K562 (cell line): ENCODE measurements at regions of chr6 and their contacts with region 1.

Region 1: DNA sequence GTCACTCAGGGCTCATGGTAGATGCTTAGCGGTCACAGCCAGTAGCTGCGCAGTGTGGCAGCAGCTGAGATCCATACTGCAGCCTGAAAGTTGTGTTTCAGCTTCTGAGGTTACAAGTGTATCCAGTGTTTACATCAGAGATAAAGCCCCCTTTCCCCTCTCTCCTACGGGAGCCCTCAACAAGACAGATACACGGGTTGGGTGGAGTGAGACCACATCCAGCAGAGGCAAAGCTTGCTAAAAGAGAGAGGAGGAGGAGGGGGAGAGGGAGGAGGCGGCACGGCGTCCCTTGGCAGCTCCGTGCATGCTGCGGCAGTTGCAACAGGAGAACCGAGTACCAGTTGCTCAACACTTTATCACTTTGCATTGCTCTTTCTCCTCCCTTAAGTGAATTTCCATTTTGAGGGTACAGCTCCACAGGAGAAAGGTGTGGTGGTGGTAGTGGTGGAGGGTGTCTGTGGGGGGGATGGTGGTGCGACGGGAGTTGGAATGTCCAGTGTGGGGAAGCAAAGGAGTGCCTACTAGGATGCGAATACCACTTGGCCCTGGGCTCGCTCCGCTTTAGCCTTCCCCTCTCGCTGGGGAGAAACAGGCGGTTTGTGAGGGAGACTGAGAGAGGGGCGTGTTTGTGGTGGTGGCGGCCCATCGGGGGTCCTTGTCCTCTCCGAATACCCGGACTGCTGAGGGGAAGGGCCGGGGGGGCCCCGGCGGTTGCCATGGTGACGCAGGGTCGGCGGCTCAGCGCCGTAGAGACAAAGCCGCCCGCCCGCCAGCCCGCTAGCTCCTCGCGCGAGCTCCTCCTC is 405 bp upstream of the RNF182 start:
- DNase-seq: peak; percentile 27 to 78 (median 47)
- ATAC-seq: peak; percentile 79
- H3K4me3 ChIP-seq: peak overlapping the region; percentile 60
- H3K27ac ChIP-seq: peak overlapping the region; percentile 77
- H3K4me1 ChIP-seq: peaks cover 14 to 47% of the 10 kb centered on the region in 2 experiments
- H3K27me3 ChIP-seq: no peaks in the 10 kb centered on the region
- CTCF ChIP-seq: no peak
- EP300 ChIP-seq: peak; percentile 20; the same call in 1 of the 2 replicates
- POLR2A ChIP-seq: peak; percentile 54
- RAD21 ChIP-seq: no peak

Region 2: GRCh38 chr6:13581700-13582229 is 342.6 kb before region 1 on chr6:
- CTCF ChIA-PET with region 1: no interaction called
- POLR2A ChIA-PET with region 1: no interaction called
- in situ Hi-C with region 1: no loop called
- intact Hi-C with region 1: no loop called
- DNase-seq: peak in 3 of 4 experiments; percentile 32 to 70 (median 40)
- ATAC-seq: peak; percentile 81
- H3K4me3 ChIP-seq: no peak overlapping the region
- H3K27ac ChIP-seq: no peak overlapping the region
- H3K4me1 ChIP-seq: peaks cover 5 to 8% of the 10 kb centered on the region in 2 experiments; a peak in 3 of 5 replicates
- H3K27me3 ChIP-seq: no peaks in the 10 kb centered on the region
- CTCF ChIP-seq: no peak
- EP300 ChIP-seq: peak; percentile 28; the same call in 1 of the 2 replicates
- POLR2A ChIP-seq: no peak
- RAD21 ChIP-seq: no peak

Region 3: DNA sequence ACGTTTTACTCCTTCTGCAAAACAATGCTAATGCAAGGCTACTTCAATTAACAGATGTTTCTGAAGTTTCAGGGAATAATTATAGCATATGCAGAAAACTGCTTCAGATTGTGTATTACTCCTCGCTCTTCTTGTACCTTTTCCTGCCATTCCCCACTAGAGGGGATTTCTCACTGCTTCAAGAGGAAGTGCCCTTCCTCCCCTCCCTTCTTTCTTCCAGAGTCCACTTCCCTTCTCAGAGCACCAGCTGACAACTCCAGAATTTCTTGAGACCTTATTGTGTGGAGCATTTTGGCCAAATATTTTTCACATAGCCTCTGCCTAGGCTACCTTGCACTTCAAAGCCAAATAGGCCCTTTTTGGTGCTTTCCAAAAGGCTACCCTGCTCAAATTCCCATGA is 97.3 kb before region 1 on chr6:
- CTCF ChIA-PET with region 1: no interaction called
- POLR2A ChIA-PET with region 1: no interaction called
- in situ Hi-C with region 1: no loop called
- intact Hi-C with region 1: no loop called
- DNase-seq: no peak
- ATAC-seq: no peak
- H3K4me3 ChIP-seq: no peak overlapping the region
- H3K27ac ChIP-seq: no peak overlapping the region
- H3K4me1 ChIP-seq: no peaks in the 10 kb centered on the region
- H3K27me3 ChIP-seq: no peaks in the 10 kb centered on the region
- CTCF ChIP-seq: no peak
- EP300 ChIP-seq: no peak
- POLR2A ChIP-seq: no peak
- RAD21 ChIP-seq: no peak

Region 4: GRCh38 chr6:13953061-13953705 is 28.8 kb after region 1 on chr6:
- CTCF ChIA-PET with region 1: no interaction called
- POLR2A ChIA-PET with region 1: no interaction called
- in situ Hi-C with region 1: no loop called
- intact Hi-C with region 1: no loop called
- DNase-seq: no peak
- ATAC-seq: peak; percentile 63
- H3K4me3 ChIP-seq: no peak overlapping the region
- H3K27ac ChIP-seq: no peak overlapping the region
- H3K4me1 ChIP-seq: no peaks in the 10 kb centered on the region; a peak in 1 of 5 replicates
- H3K27me3 ChIP-seq: no peaks in the 10 kb centered on the region
- CTCF ChIP-seq: no peak
- EP300 ChIP-seq: no peak
- POLR2A ChIP-seq: no peak
- RAD21 ChIP-seq: no peak

Region 5: GRCh38 chr6:13979284-13980171 is 55.2 kb after region 1 on chr6:
- CTCF ChIA-PET with region 1: no interaction called
- POLR2A ChIA-PET with region 1: interaction called, 3 read pairs
- in situ Hi-C with region 1: no loop called
- intact Hi-C with region 1: loop called (anchors 1 kb)
- DNase-seq: peak; percentile 37 to 82 (median 54)
- ATAC-seq: peak; percentile 74
- H3K4me3 ChIP-seq: no peak overlapping the region
- H3K27ac ChIP-seq: peak overlapping the region; percentile 90
- H3K4me1 ChIP-seq: peaks cover 8 to 41% of the 10 kb centered on the region in 2 experiments
- H3K27me3 ChIP-seq: no peaks in the 10 kb centered on the region
- CTCF ChIP-seq: peak in 1 of 3 experiments; percentile 3; a peak in 1 of 6 replicates
- EP300 ChIP-seq: peak; percentile 99
- POLR2A ChIP-seq: no peak
- RAD21 ChIP-seq: no peak

Region 6: GRCh38 chr6:13992417-13993055 is 68.2 kb after region 1 on chr6:
- CTCF ChIA-PET with region 1: no interaction called
- POLR2A ChIA-PET with region 1: interaction called, 4 read pairs
- in situ Hi-C with region 1: no loop called
- intact Hi-C with region 1: loop called (anchors 1 kb)
- DNase-seq: peak; percentile 76 to 82 (median 80)
- ATAC-seq: peak; percentile 85
- H3K4me3 ChIP-seq: no peak overlapping the region
- H3K27ac ChIP-seq: peak overlapping the region; percentile 68
- H3K4me1 ChIP-seq: peaks cover 24 to 49% of the 10 kb centered on the region in 2 experiments
- H3K27me3 ChIP-seq: no peaks in the 10 kb centered on the region
- CTCF ChIP-seq: no peak
- EP300 ChIP-seq: peak; percentile 82
- POLR2A ChIP-seq: no peak
- RAD21 ChIP-seq: peak in 1 of 2 experiments; percentile 17; a peak in 1 of 4 replicates

Region 7: DNA sequence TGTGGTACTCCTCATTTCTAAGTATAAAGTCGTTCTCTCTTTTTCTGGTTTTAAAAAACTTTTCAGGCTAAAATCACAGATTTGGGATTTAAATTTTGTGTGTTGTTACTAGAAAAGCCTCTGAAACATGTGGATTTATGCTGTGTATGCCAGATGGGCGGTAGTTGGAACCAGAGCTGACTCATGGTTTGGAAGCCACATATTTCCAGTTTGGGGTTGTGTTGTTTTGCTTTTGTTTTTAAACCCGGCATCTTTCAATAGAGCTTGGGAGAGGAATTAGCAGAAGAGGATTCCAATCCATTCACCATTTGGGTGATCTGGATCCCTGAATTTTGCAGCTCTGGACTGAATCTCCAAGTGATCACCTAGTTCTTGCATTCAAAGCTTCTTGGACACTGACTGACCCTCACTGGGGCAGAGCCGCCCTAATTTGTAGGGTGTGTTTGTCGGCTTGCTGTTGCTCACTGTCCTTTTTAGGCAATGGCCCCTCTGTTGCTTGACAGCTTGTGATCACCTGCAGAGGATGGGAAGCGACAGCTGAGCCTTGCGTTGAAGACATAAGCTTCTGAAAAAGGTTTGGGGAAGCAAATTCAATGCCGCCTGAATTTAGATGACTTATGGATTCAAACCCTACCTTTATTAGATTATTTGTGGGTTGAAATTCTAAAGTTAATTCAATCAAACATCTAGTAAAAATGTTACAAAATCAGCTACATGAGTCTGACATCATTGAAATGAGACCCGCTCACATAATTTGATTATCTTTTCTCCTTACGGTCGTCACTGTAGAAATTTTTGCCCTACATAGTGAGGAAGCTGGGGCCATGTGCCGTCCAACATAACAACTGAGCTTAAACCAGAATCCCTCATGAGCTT is 113.3 kb after region 1 on chr6:
- CTCF ChIA-PET with region 1: no interaction called
- POLR2A ChIA-PET with region 1: interaction called, 4 read pairs
- in situ Hi-C with region 1: no loop called
- intact Hi-C with region 1: loop called (anchors 2 kb)
- DNase-seq: peak in 2 of 4 experiments; percentile 27 to 30
- ATAC-seq: peak; percentile 30; the same call in 1 of the 3 replicates
- H3K4me3 ChIP-seq: no peak overlapping the region
- H3K27ac ChIP-seq: no peak overlapping the region
- H3K4me1 ChIP-seq: peaks cover 0 to 25% of the 10 kb centered on the region in 2 experiments; a peak in 3 of 5 replicates
- H3K27me3 ChIP-seq: no peaks in the 10 kb centered on the region
- CTCF ChIP-seq: no peak
- EP300 ChIP-seq: no peak
- POLR2A ChIP-seq: no peak
- RAD21 ChIP-seq: no peak

Region 8: DNA sequence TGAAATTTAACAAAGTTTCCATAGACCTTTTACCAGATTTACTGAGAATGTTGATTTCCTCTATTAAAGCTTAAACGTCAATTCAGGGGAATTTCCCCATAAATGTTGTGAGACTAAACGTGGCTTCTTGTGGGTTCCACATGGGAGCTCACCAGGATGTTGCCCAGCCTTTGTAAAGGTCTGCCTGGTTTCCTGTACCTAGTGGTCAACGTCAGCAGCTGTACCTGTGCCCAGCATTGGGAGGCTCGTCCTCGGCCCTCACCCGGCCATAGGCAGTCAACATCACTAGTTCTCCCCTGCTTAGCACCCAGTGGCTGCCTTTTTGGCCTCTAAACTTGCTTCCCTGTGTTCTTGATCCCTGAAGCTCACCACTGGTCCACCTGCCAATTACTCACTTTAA is 171.1 kb after region 1 on chr6:
- CTCF ChIA-PET with region 1: no interaction called
- POLR2A ChIA-PET with region 1: no interaction called
- in situ Hi-C with region 1: no loop called
- intact Hi-C with region 1: no loop called
- DNase-seq: no peak
- ATAC-seq: no peak
- H3K4me3 ChIP-seq: no peak overlapping the region
- H3K27ac ChIP-seq: no peak overlapping the region
- H3K4me1 ChIP-seq: no peaks in the 10 kb centered on the region
- H3K27me3 ChIP-seq: no peaks in the 10 kb centered on the region
- CTCF ChIP-seq: no peak
- EP300 ChIP-seq: no peak
- POLR2A ChIP-seq: no peak
- RAD21 ChIP-seq: no peak